GM12878 (cell line): ENCODE measurements at regions of chr5 and their contacts with region 1.

Region 1: GRCh38 chr5:32174011-32174870 is at the start of gene GOLPH3:
- DNase-seq: no peak
- ATAC-seq: peak; percentile 89
- H3K4me3 ChIP-seq: peak within 1 kb of the TSS; percentile 95
- H3K27ac ChIP-seq: peak within 1 kb of the TSS; percentile 98
- H3K4me1 ChIP-seq: peaks cover 3% of the 10 kb centered on the region; the same call in 1 of the 2 replicates
- H3K27me3 ChIP-seq: no peaks in the 10 kb centered on the region
- CTCF ChIP-seq: no peak
- EP300 ChIP-seq: no peak
- POLR2A ChIP-seq: peak; percentile 96
- RAD21 ChIP-seq: no peak
- polyA plus RNA-seq, gene GOLPH3: 14.0 to 28.5 TPM

Region 2: DNA sequence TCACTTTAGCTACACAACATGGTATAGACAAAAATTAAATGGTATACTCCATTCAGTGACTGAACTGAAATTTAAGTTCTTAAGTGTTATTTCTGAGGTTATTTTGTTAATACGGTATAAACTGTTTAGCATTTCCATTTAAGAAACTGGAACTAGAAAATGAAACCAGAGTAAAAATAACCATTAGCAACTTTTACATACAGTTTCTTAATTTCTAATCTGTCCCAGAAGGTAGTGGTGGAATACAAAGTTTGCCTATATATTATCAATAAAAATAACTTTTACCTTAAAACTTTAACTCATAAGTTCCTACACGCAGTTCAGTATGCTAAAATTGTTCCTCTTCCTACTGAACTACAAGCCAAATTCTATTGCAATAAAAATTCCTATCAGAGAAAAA is 10.5 kb before region 1 on chr5:
- CTCF ChIA-PET with region 1: interaction called, 4 read pairs
- POLR2A ChIA-PET with region 1: interaction called, 22 read pairs
- RAD21 ChIA-PET with region 1: interaction called, 12 read pairs
- SMC1A ChIA-PET with region 1: interaction called, 6 read pairs
- in situ Hi-C with region 1: no loop called
- intact Hi-C with region 1: no loop called
- DNase-seq: no peak
- ATAC-seq: peak; percentile 50
- H3K4me3 ChIP-seq: peak overlapping the region; percentile 45; the same call in 1 of the 2 replicates
- H3K27ac ChIP-seq: peak overlapping the region; percentile 63
- H3K4me1 ChIP-seq: peaks cover 45% of the 10 kb centered on the region
- H3K27me3 ChIP-seq: no peaks in the 10 kb centered on the region
- CTCF ChIP-seq: no peak
- EP300 ChIP-seq: no peak
- POLR2A ChIP-seq: no peak
- RAD21 ChIP-seq: no peak

Region 3: GRCh38 chr5:32210151-32210550 is 35.9 kb after region 1 on chr5:
- CTCF ChIA-PET with region 1: no interaction called
- POLR2A ChIA-PET with region 1: interaction called, 4 read pairs
- RAD21 ChIA-PET with region 1: interaction called, 3 read pairs
- SMC1A ChIA-PET with region 1: interaction called, 4 read pairs
- in situ Hi-C with region 1: no loop called
- intact Hi-C with region 1: loop called (anchors 2 kb)
- DNase-seq: no peak
- ATAC-seq: no peak
- H3K4me3 ChIP-seq: no peak overlapping the region
- H3K27ac ChIP-seq: peak overlapping the region; percentile 92; the same call in 1 of the 2 replicates
- H3K4me1 ChIP-seq: peaks cover 11% of the 10 kb centered on the region
- H3K27me3 ChIP-seq: no peaks in the 10 kb centered on the region
- CTCF ChIP-seq: no peak
- EP300 ChIP-seq: no peak
- POLR2A ChIP-seq: no peak
- RAD21 ChIP-seq: no peak

Region 4: DNA sequence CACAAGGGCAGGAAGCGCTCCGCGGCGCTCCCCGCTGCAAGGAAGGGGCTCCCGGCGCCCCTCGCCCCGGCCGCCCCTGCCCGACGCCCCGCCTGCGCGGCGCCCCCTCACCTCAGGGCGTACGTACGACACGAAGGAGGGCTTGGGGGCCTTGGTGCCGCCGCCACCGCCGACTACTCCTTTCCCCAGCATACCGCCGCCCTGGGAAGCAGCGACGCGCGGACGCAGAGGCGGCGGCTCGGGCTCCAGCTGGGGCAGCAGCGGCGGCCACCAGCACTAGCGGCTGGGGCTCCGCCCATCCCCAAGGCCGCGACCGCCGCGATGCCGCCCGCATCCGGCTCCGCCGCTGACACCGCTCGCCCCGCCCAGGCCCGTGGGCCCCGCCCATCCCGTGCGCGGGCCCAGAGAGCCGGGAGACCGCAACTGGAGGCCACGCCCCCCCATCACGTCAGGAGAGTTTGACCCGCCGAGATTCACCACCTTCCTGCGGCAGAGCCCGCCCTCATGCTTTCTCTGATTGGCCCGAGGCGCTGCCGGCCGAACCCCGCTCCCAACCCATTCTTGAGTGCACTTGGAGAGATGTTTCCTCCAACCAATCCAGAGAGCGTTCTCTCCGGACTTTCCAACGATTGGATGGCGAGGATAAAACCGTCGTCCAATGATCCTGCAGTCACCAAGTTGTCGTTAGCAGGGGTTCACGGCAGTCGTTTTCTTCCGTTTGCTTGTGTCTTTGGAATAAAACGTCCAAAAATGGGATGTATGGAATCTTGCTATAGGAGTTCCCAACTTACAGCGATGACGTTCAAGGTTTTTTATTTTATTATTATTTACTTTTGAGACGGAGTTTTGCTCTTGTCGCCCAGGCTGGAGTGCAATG is 138.6 kb after region 1 on chr5 and contains the start of gene MTMR12:
- CTCF ChIA-PET with region 1: no interaction called
- POLR2A ChIA-PET with region 1: interaction called, 3 read pairs
- RAD21 ChIA-PET with region 1: no interaction called
- SMC1A ChIA-PET with region 1: interaction called, 3 read pairs
- in situ Hi-C with region 1: no loop called
- intact Hi-C with region 1: loop called (anchors 2 kb)
- DNase-seq: peak; percentile 98
- ATAC-seq: peak; percentile 95
- H3K4me3 ChIP-seq: peak within 1 kb of the TSS; percentile 73
- H3K27ac ChIP-seq: peak within 1 kb of the TSS; percentile 83
- H3K4me1 ChIP-seq: peaks cover 13% of the 10 kb centered on the region
- H3K27me3 ChIP-seq: no peaks in the 10 kb centered on the region
- CTCF ChIP-seq: no peak
- EP300 ChIP-seq: peak in 1 of 2 experiments; percentile 35; a peak in 1 of 4 replicates
- POLR2A ChIP-seq: peak; percentile 89
- RAD21 ChIP-seq: no peak
- polyA plus RNA-seq, gene MTMR12: 5.0 to 8.1 TPM

Region 5: GRCh38 chr5:32444431-32445286 is 270.4 kb after region 1 on chr5 and contains the start of gene ZFR:
- CTCF ChIA-PET with region 1: no interaction called
- POLR2A ChIA-PET with region 1: no interaction called
- RAD21 ChIA-PET with region 1: no interaction called
- SMC1A ChIA-PET with region 1: no interaction called
- in situ Hi-C with region 1: no loop called
- intact Hi-C with region 1: loop called (anchors 5 kb)
- DNase-seq: peak; percentile 60
- ATAC-seq: peak; percentile 90
- H3K4me3 ChIP-seq: peak within 1 kb of the TSS; percentile 82
- H3K27ac ChIP-seq: peak within 1 kb of the TSS; percentile 86
- H3K4me1 ChIP-seq: peaks cover 14% of the 10 kb centered on the region
- H3K27me3 ChIP-seq: no peaks in the 10 kb centered on the region; a peak in 1 of 4 replicates
- CTCF ChIP-seq: no peak
- EP300 ChIP-seq: no peak
- POLR2A ChIP-seq: peak; percentile 84
- RAD21 ChIP-seq: no peak
- polyA plus RNA-seq, gene ZFR: 33.7 to 37.1 TPM

Region 6: GRCh38 chr5:32542216-32543059 is 368.2 kb after region 1 on chr5:
- CTCF ChIA-PET with region 1: no interaction called
- POLR2A ChIA-PET with region 1: no interaction called
- RAD21 ChIA-PET with region 1: no interaction called
- SMC1A ChIA-PET with region 1: no interaction called
- in situ Hi-C with region 1: no loop called
- intact Hi-C with region 1: loop called (anchors 5 kb)
- DNase-seq: peak; percentile 97
- ATAC-seq: peak; percentile 69
- H3K4me3 ChIP-seq: peak overlapping the region; percentile 12; the same call in 1 of the 2 replicates
- H3K27ac ChIP-seq: peak overlapping the region; percentile 96
- H3K4me1 ChIP-seq: peaks cover 55% of the 10 kb centered on the region
- H3K27me3 ChIP-seq: no peaks in the 10 kb centered on the region
- CTCF ChIP-seq: no peak
- EP300 ChIP-seq: peak; percentile 94 to 96
- POLR2A ChIP-seq: 0 out of 2 replicates have a peak, but pooled peaks have one; percentile 39
- RAD21 ChIP-seq: peak; percentile 8; the same call in 1 of the 2 replicates

Region 7: GRCh38 chr5:32630867-32631491 is 456.7 kb after region 1 on chr5:
- CTCF ChIA-PET with region 1: no interaction called
- POLR2A ChIA-PET with region 1: no interaction called
- RAD21 ChIA-PET with region 1: no interaction called
- SMC1A ChIA-PET with region 1: no interaction called
- in situ Hi-C with region 1: no loop called
- intact Hi-C with region 1: no loop called
- DNase-seq: no peak
- ATAC-seq: no peak
- H3K4me3 ChIP-seq: no peak overlapping the region
- H3K27ac ChIP-seq: no peak overlapping the region
- H3K4me1 ChIP-seq: no peaks in the 10 kb centered on the region
- H3K27me3 ChIP-seq: no peaks in the 10 kb centered on the region
- CTCF ChIP-seq: no peak
- EP300 ChIP-seq: no peak
- POLR2A ChIP-seq: no peak
- RAD21 ChIP-seq: no peak